ENCODE measurements at regions of chr4 and their contacts with region 1.

Region 1: GRCh38 chr4:68271851-68272756 is 26.6 kb upstream of the TMPRSS11B start:
- DNase-seq: peak; percentile 1 to 19 (median 5)
- H3K4me3 ChIP-seq: peak overlapping the region in 1 of 3 experiments; percentile 28
- H3K4me3 Mint-ChIP-seq: peak overlapping the region; percentile 31 to 68
- H3K27ac ChIP-seq: no peak overlapping the region
- H3K27ac Mint-ChIP-seq: no peak overlapping the region
- H3K4me1 ChIP-seq: no peaks in the 10 kb centered on the region
- H3K4me1 Mint-ChIP-seq: peaks cover 18% of the 10 kb centered on the region
- H3K27me3 ChIP-seq: no peaks in the 10 kb centered on the region
- H3K27me3 Mint-ChIP-seq: peaks cover 0 to 4% (median 2%) of the 10 kb centered on the region in 3 donors
- CTCF ChIP-seq: peak; percentile 74

Region 2: GRCh38 chr4:68375667-68376559 is 103.8 kb after region 1 on chr4:
- intact Hi-C with region 1: loop called in 1 of 2 experiments (anchors 10 kb)
- DNase-seq: peak; percentile 12 to 39 (median 34)
- H3K4me3 ChIP-seq: peak overlapping the region in 1 of 3 experiments; percentile 43
- H3K4me3 Mint-ChIP-seq: peak overlapping the region; percentile 68 to 86
- H3K27ac ChIP-seq: no peak overlapping the region
- H3K27ac Mint-ChIP-seq: peak overlapping the region in 1 of 7 donors; percentile 44
- H3K4me1 ChIP-seq: peaks cover 5 to 7% of the 10 kb centered on the region in 2 donors
- H3K4me1 Mint-ChIP-seq: peaks cover 12% of the 10 kb centered on the region
- H3K27me3 ChIP-seq: peaks cover 0 to 3% of the 10 kb centered on the region in 2 donors
- H3K27me3 Mint-ChIP-seq: peaks cover 3 to 8% (median 6%) of the 10 kb centered on the region in 3 donors
- CTCF ChIP-seq: peak; percentile 85

Measured in CD14-positive monocyte (primary cell).